K562 (cell line): ENCODE measurements at regions of chr13 and their contacts with region 1.

Region 1: DNA sequence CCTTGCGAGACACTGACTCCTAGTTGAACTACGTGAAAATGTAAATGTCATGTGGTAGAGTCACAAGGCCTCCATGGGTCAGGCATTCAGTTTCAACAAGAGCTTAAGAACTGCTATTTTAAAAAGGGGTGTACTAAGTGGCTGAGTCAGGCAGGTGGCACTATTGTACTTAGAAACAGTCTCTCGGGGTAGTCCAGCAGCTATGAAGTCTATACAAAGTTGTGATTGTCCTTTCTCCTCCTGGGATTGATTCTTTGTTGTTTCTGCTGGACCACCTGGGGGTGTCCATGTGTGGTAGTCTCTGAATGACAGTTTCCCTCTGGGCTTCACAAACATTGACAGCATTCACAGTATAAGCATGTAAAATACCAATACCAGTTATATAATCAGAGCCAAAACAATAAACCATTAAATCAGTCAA is 33.0 kb downstream of the UGGT2 start:
- DNase-seq: peak; percentile 11 to 56 (median 26)
- ATAC-seq: peak; percentile 93
- H3K4me3 ChIP-seq: no peak overlapping the region
- H3K27ac ChIP-seq: no peak overlapping the region
- H3K4me1 ChIP-seq: no peaks in the 10 kb centered on the region
- H3K27me3 ChIP-seq: no peaks in the 10 kb centered on the region
- CTCF ChIP-seq: peak; percentile 34 to 73 (median 48); a peak in 4 of 6 replicates
- EP300 ChIP-seq: no peak
- POLR2A ChIP-seq: no peak
- RAD21 ChIP-seq: peak; percentile 54 to 64

Region 2: GRCh38 chr13:95463531-95463930 is 556.6 kb before region 1 on chr13:
- CTCF ChIA-PET with region 1: no interaction called
- POLR2A ChIA-PET with region 1: no interaction called
- in situ Hi-C with region 1: no loop called
- intact Hi-C with region 1: no loop called
- DNase-seq: no peak
- ATAC-seq: no peak
- H3K4me3 ChIP-seq: no peak overlapping the region
- H3K27ac ChIP-seq: no peak overlapping the region
- H3K4me1 ChIP-seq: no peaks in the 10 kb centered on the region
- H3K27me3 ChIP-seq: no peaks in the 10 kb centered on the region
- CTCF ChIP-seq: no peak
- EP300 ChIP-seq: no peak
- POLR2A ChIP-seq: no peak
- RAD21 ChIP-seq: no peak

Region 3: GRCh38 chr13:96075953-96076543 is 55.9 kb after region 1 on chr13:
- CTCF ChIA-PET with region 1: interaction called, 4 read pairs
- POLR2A ChIA-PET with region 1: no interaction called
- in situ Hi-C with region 1: no loop called
- intact Hi-C with region 1: loop called (anchors 5 kb)
- DNase-seq: peak in 2 of 4 experiments; percentile 8 to 21
- ATAC-seq: peak; percentile 45
- H3K4me3 ChIP-seq: no peak overlapping the region
- H3K27ac ChIP-seq: no peak overlapping the region
- H3K4me1 ChIP-seq: no peaks in the 10 kb centered on the region
- H3K27me3 ChIP-seq: no peaks in the 10 kb centered on the region; a peak in 2 of 5 replicates
- CTCF ChIP-seq: peak; percentile 9 to 55 (median 43); a peak in 4 of 6 replicates
- EP300 ChIP-seq: no peak
- POLR2A ChIP-seq: no peak
- RAD21 ChIP-seq: peak in 1 of 2 experiments; percentile 28; a peak in 2 of 4 replicates

Region 4: DNA sequence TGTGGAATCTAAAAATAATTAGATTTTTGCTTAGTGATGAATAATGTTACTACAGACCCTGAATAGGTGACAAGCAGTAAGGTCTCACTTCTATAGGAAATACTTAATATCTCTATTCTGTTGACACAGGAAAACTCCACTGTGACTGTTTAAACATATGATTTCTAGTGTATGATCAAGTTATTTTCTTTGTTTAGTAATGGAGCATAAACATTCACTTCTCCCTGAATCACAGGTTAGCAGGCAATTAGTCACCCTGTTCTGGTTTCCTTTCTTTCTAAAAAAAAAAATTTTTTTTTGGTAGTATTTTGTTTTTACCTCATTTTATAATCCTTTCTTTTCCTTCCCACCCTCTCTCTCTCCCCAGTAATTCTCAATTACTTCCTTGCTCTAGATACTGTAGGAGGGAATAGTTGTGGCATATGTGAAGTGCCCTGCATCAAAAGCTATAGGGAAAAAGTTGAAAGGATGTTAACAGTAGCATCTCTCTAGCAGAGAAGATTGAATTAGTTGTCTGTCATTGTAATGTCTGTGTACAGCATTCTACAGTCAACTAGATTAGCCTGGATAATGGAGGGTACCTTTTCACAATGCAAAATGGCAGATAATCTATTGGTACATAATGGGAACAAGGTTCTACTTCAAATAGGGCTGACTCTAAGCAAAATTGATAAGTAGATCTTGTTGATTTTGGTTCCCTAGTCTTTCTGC is 73.3 kb after region 1 on chr13:
- CTCF ChIA-PET with region 1: no interaction called
- POLR2A ChIA-PET with region 1: no interaction called
- in situ Hi-C with region 1: no loop called
- intact Hi-C with region 1: no loop called
- DNase-seq: no peak
- ATAC-seq: no peak
- H3K4me3 ChIP-seq: no peak overlapping the region
- H3K27ac ChIP-seq: no peak overlapping the region
- H3K4me1 ChIP-seq: peaks cover 0 to 18% of the 10 kb centered on the region in 2 experiments; a peak in 2 of 5 replicates
- H3K27me3 ChIP-seq: peaks cover 16 to 19% of the 10 kb centered on the region in 2 experiments
- CTCF ChIP-seq: no peak
- EP300 ChIP-seq: no peak
- POLR2A ChIP-seq: no peak
- RAD21 ChIP-seq: no peak

Region 5: DNA sequence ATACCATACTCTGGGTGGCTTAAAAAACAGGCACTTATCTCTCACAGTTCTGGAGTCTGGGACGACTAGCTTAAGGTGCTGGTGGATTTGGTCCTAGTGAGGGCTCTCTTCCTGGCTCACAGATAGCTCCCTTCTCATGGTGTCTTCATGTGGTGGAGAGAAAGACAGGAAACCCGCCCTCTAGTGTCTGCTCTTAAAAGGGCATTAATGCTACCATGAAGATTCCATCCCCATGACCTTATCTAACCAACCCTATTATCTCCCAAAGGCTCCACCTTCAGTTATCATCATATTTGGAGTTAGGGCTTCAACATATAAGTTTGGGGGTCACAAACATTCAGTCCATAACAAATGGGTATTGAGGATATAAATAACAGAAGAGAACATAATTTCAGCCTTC is 209.2 kb after region 1 on chr13:
- CTCF ChIA-PET with region 1: interaction called, 6 read pairs
- POLR2A ChIA-PET with region 1: interaction called, 4 read pairs
- in situ Hi-C with region 1: no loop called
- intact Hi-C with region 1: loop called (anchors 1 kb)
- DNase-seq: peak; percentile 8 to 28 (median 14)
- ATAC-seq: peak; percentile 82
- H3K4me3 ChIP-seq: no peak overlapping the region
- H3K27ac ChIP-seq: no peak overlapping the region
- H3K4me1 ChIP-seq: no peaks in the 10 kb centered on the region
- H3K27me3 ChIP-seq: no peaks in the 10 kb centered on the region
- CTCF ChIP-seq: peak; percentile 44 to 58 (median 57)
- EP300 ChIP-seq: no peak
- POLR2A ChIP-seq: no peak
- RAD21 ChIP-seq: peak in 1 of 2 experiments; percentile 45; a peak in 2 of 4 replicates

Region 6: GRCh38 chr13:96817336-96817941 is 797.3 kb after region 1 on chr13:
- CTCF ChIA-PET with region 1: no interaction called
- POLR2A ChIA-PET with region 1: no interaction called
- in situ Hi-C with region 1: no loop called
- intact Hi-C with region 1: loop called (anchors 5 kb)
- DNase-seq: peak in 2 of 4 experiments; percentile 3 to 7
- ATAC-seq: no peak
- H3K4me3 ChIP-seq: no peak overlapping the region
- H3K27ac ChIP-seq: no peak overlapping the region
- H3K4me1 ChIP-seq: no peaks in the 10 kb centered on the region
- H3K27me3 ChIP-seq: no peaks in the 10 kb centered on the region
- CTCF ChIP-seq: peak in 2 of 3 experiments; percentile 12 to 41; a peak in 3 of 6 replicates
- EP300 ChIP-seq: no peak
- POLR2A ChIP-seq: no peak
- RAD21 ChIP-seq: peak; percentile 64

Region 7: DNA sequence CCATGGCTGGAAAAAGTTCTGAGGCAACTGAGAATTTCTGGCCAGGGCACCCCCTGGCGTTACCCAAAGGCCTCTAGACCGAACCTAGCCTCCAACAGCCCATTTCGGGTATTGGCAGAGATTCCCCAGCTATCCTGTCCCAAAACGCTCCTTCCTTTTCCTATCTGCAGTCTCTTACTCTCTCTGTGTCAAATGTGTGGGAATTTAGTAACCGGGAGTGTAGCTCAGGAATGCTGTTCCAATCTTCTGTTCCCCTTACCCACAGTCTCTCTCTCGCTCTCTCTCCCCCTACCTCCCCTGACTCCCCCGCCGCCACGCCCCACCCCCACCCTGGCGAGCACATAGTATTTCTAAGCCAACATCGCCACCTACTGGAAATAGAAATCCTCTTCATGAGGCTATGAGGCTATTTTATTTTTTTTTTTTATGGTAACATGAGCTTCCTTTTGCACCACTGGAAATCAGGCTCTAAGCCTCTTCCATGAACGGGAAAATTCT is 947.1 kb after region 1 on chr13:
- CTCF ChIA-PET with region 1: interaction called, 5 read pairs
- POLR2A ChIA-PET with region 1: interaction called, 3 read pairs
- in situ Hi-C with region 1: no loop called
- intact Hi-C with region 1: loop called (anchors 10 kb)
- DNase-seq: peak; percentile 54 to 64 (median 60)
- ATAC-seq: peak; percentile 93
- H3K4me3 ChIP-seq: peak overlapping the region; percentile 13; the same call in 1 of the 2 replicates
- H3K27ac ChIP-seq: no peak overlapping the region
- H3K4me1 ChIP-seq: no peaks in the 10 kb centered on the region
- H3K27me3 ChIP-seq: no peaks in the 10 kb centered on the region
- CTCF ChIP-seq: peak; percentile 16 to 51 (median 35); a peak in 4 of 6 replicates
- EP300 ChIP-seq: no peak
- POLR2A ChIP-seq: no peak
- RAD21 ChIP-seq: no peak